Left colon (tissue), 2 donors: ENCODE measurements at regions of chr22 and their contacts with region 1.

Region 1: DNA sequence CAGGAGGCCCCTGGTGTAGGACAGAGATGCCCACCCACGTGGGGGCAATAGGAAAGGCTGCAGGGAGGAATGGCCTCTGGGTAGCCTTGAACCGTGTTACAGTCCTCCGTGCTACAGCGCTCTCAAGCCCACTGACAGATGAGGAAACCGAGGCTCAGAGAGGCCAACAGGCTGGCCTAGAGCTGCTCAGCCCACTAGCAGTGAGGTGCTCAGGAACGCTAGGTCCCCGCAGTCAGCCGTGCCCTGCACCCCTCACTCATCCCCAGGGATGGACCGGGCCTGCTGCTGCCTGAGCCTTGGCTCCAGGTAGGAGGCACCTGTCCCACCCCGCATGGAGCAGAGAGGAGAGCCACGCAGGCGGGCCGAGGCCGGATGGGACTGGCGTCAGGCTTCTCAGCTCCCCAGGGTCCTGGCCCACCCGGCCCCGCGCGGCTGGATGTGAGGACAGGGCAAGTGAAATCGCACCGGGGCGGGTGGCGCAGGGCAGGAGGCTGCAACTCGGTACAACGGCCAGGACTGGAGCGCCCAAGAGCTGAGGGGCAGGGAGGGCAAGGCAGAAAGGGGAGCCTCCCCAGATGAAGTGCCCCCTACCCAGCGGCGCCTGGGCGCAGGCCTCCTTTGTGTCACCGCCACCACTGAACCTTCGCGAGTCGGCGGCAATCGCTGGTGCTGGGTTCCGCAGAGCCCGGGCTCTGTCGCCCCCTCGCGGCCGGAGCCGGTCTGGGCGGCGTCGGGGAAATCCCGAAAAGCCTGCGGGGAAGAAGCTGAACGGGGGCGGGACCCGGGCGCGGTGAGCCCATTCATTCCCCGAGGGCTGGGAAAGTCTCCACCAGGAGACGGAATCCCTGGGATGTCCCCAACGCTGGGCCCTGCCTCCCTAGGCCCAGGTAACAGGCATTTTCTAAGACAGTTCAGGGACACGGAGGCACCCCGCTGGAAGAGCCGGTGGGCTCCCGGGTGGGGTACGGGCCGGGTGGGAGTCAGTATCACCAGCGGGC is 8.4 kb upstream of the SLC2A11 start:
- DNase-seq: peak in 1 of 2 donors; percentile 86
- ATAC-seq: peak; percentile 89

Region 2: DNA sequence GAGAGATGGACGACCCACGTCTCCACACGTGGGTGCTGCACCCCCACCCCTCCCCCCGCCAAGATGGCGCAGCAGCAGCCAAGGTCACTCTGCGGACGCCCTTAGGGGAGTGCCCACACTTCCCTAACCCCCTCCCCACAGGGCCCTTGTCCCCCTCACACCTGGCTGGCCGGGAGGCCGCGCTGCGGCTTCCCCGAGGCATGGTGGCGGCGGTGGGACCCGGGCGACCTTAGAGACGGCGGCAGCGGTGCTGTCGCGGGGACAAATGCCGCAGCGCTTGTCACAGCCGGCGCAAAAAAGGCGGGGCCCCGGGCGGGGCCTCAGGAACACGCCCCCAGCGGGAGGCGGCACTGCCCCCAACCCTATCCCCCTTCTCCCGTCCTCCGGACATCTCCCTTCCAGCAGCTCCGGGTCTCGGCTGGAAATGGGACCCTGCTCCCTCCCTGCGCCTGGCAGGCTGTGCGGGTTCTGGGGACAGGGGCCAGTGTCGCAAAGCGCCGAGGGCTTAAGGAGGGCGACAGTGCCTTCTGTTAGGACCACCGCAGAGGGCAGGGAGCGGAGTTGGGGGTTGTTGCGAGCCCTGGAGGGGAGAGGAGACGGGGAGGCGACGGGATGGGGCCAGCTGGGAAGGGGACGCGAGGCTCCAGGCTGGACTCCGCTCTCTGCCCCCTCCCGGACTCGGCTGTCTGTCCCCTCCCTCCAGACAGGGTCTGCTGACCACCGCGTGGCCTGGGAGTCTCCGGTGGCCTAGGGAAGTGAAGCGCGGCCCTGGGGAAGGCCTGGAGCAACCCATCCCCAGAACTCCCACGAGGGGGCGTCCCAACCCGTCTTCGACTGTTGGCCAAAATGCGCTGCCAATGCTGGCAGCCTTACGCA is 81.4 kb before region 1 on chr22 and contains the start of gene CHCHD10:
- intact Hi-C with region 1: loop called (anchors 5 to 10 kb)
- DNase-seq: peak; percentile 87 to 94
- ATAC-seq: peak; percentile 77
- total RNA-seq, gene CHCHD10: 413 to 538 TPM

Region 3: GRCh38 chr22:23893943-23894709 is 44.8 kb after region 1 on chr22 and contains the start of gene MIF:
- intact Hi-C with region 1: no loop called
- DNase-seq: peak; percentile 93 to 96
- ATAC-seq: peak; percentile 84
- total RNA-seq, gene MIF: 215 to 286 TPM